Gastrocnemius medialis (tissue), 4 donors: ENCODE measurements at regions of chr11 and their contacts with region 1.

Region 1: DNA sequence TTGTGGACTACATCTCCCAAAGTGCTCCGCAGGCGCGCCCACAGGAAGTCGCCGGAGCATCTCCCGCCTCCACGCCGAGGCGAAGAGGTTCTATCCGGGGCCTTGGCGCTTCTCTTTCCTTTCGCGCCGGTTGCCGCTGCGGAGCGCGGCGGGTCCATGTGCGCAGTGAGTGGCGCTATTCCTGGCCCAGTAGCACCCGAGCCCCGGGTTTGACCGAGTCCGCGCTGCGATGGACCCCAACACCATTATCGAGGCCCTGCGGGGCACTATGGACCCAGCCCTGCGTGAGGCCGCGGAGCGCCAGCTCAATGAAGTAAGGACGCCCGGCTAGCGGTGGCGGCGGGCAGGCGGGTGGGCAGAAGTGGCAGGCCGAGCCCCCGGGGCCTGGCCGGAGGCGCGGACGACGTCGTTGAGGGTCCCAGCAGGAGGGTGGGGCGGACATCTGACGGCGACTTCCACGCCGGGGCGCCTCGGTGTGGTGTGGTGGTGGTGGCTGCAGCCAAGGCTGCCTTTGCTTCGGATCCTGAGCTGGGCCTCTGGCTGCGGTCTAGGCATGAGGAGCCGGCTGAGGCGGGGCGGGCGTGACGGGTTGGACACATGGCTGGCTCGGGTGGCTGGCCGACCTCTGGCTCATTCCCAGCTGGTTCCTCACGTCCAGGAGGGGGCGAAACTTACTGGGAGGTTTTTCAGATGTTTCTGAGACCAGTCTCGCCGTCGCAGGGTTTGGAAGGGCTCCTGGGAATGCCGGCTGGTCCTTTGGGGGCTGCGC is at the start of gene IPO7:
- DNase-seq: peak; percentile 90 to 92
- ATAC-seq: peak; percentile 94
- H3K4me3 ChIP-seq: peak within 1 kb of the TSS; percentile 82 to 96 (median 92)
- H3K27ac ChIP-seq: peak within 1 kb of the TSS; percentile 94 to 99 (median 96)
- H3K4me1 ChIP-seq: peaks cover 32 to 33% of the 10 kb centered on the region in 2 donors
- H3K27me3 ChIP-seq: no peaks in the 10 kb centered on the region
- CTCF ChIP-seq: peak in 2 of 5 experiments; percentile 21 to 26
- POLR2A ChIP-seq: peak; percentile 92 to 93
- total RNA-seq, gene IPO7: 167 to 286 (median 179) TPM

Region 2: DNA sequence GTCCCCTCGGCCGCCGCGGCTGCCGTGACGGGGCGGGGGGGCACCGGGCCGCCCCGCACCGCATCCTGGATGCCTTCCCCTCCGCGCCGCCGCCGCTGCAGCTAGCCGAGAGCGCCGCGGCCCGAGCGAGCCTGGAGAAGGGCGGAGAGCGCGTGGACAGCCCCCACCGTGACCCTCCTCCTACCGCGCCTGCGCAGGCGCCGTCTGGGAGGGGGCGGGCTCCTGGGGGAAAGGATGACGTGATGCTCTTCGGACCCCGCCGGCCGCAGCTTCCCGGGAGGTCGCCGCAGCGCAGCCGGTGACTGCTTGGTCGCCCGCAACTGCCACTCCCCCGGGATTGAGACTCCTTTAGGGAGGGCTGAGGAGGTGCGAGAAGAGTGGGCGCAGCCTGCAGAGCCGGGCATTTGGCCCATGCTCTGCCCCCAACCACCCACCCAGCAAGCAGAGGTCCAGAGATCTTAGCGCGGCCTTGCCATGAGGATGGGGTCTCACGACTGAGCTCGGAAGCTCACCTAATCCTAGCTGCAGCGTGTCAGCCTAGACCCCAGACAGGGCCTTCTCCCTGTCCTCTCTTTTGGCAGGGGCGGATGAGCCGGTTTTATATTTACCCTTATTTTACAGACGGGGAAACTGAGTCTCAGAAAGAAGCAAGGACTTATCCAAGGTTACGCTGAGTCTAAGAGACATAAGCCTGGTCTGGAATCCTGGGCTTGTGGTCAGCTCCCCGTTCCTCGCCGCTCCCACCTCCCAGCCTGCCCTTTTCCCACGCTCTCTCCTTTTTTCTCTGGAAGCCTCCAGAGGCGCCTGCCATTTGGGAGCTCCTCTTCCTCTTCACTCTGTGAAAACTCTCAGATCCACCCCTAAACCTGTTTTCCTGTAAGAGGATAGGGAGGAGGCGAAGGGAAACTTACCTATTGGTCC is 119.2 kb before region 1 on chr11 and contains the start of gene DENND5A:
- in situ Hi-C with region 1: no loop called
- intact Hi-C with region 1: loop called (anchors 2 kb)
- DNase-seq: peak; percentile 63 to 70
- ATAC-seq: peak; percentile 79 to 92
- H3K4me3 ChIP-seq: peak within 1 kb of the TSS; percentile 83 to 97 (median 94)
- H3K27ac ChIP-seq: peak within 1 kb of the TSS; percentile 80 to 94 (median 89)
- H3K4me1 ChIP-seq: peaks cover 4 to 13% of the 10 kb centered on the region in 2 donors
- H3K27me3 ChIP-seq: no peaks in the 10 kb centered on the region
- CTCF ChIP-seq: no peak
- POLR2A ChIP-seq: peak; percentile 78 to 82
- total RNA-seq, gene DENND5A: 29.1 to 33.1 (median 31.5) TPM

Region 3: DNA sequence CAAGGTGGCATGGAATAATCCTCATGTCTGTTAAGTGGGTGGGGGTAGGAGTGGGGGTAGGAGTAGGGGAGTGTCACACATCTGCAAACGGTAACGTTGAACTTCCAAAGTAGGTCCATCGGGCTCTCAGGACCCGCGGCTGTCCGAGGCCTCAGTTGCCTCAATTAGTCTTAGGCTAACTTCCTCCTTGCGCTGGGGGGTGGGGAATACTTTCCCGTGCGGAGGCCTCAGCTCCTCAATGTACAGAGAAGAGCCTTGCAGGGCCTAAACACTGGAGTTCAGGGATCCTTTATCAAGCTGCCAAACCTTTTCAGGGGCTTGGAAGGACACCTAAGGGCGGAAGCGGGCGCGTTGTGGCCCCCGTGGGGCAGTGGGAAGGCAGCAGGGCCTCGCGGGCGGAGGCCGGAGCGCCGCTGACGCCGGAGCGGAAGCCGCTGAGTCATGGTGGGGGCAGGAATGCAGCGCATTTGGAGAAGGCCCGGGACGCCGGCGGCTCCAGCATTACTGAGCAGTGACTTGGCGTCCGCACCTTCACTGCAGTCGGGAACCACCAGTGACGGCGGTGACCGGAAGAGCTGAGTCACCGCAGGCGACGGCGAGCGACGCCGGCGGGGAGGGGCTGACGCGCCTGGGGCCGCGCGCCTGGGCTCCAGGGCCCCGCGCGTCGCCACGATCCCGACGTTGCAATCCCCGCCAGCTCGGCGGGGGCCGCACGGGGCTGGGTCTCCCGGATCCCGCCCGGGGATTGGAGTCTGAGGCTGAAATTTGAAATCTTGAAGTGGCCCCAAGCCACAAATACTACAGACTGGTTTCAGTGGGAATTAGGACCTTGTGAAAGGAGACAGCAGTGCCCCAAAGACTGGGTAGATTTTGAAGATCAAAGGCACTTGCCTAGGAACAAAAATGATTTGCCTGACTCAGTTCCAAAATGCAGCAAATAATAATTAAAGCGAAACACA is 20.5 kb before region 1 on chr11:
- in situ Hi-C with region 1: no loop called
- intact Hi-C with region 1: loop called (anchors 1 kb)
- DNase-seq: peak; percentile 93 to 96
- ATAC-seq: peak; percentile 98
- H3K4me3 ChIP-seq: peak overlapping the region; percentile 46 to 69 (median 56)
- H3K27ac ChIP-seq: peak overlapping the region; percentile 98 to 100 (median 99)
- H3K4me1 ChIP-seq: peaks cover 3 to 8% of the 10 kb centered on the region in 2 donors
- H3K27me3 ChIP-seq: no peaks in the 10 kb centered on the region
- CTCF ChIP-seq: no peak
- POLR2A ChIP-seq: peak; percentile 68 to 82

Region 4: GRCh38 chr11:9460322-9461067 is 75.8 kb after region 1 on chr11 and contains the start of gene ZNF143:
- in situ Hi-C with region 1: no loop called
- intact Hi-C with region 1: loop called (anchors 1 kb)
- DNase-seq: peak; percentile 100
- ATAC-seq: peak; percentile 92 to 95
- H3K4me3 ChIP-seq: peak within 1 kb of the TSS; percentile 87 to 100 (median 96)
- H3K27ac ChIP-seq: peak within 1 kb of the TSS; percentile 98 to 100 (median 100)
- H3K4me1 ChIP-seq: peaks cover 20 to 27% of the 10 kb centered on the region in 2 donors
- H3K27me3 ChIP-seq: no peaks in the 10 kb centered on the region
- CTCF ChIP-seq: peak in 3 of 5 experiments; percentile 19 to 69 (median 42)
- POLR2A ChIP-seq: peak; percentile 88 to 94
- total RNA-seq, gene ZNF143: 33.3 to 42.6 (median 36.9) TPM